AG04450 (cell line): ENCODE measurements at regions of chr12 and their contacts with region 1.

Region 1: DNA sequence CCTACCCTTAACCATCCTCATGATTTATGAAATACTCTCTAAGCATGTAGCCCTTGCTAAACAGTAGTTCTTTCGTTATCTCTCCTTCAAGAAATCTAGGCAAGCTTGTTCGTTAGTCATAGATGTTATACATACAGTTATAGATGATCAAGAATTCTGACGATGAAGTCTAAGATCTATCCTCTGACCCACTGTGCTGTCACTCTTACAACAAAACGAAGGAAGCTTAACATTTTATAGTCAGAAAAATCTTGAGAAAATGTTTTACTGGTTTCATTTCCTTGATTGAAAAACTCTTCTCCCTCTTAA is 68.9 kb downstream of the SPPL3 start:
- DNase-seq: no peak
- H3K4me3 ChIP-seq: no peak overlapping the region
- H3K27ac ChIP-seq: no peak overlapping the region
- H3K27me3 ChIP-seq: no peaks in the 10 kb centered on the region
- CTCF ChIP-seq: no peak

Region 2: GRCh38 chr12:120849765-120850164 is 14.5 kb after region 1 on chr12:
- CTCF ChIA-PET with region 1: no interaction called
- POLR2A ChIA-PET with region 1: no interaction called
- DNase-seq: peak; percentile 29
- H3K4me3 ChIP-seq: no peak overlapping the region
- H3K27ac ChIP-seq: no peak overlapping the region
- H3K27me3 ChIP-seq: no peaks in the 10 kb centered on the region
- CTCF ChIP-seq: no peak

Region 3: GRCh38 chr12:120920178-120920577 is 84.9 kb after region 1 on chr12:
- CTCF ChIA-PET with region 1: interaction called, 10 read pairs
- POLR2A ChIA-PET with region 1: no interaction called
- DNase-seq: no peak
- H3K4me3 ChIP-seq: no peak overlapping the region
- H3K27ac ChIP-seq: no peak overlapping the region
- H3K27me3 ChIP-seq: no peaks in the 10 kb centered on the region
- CTCF ChIP-seq: no peak

Region 4: DNA sequence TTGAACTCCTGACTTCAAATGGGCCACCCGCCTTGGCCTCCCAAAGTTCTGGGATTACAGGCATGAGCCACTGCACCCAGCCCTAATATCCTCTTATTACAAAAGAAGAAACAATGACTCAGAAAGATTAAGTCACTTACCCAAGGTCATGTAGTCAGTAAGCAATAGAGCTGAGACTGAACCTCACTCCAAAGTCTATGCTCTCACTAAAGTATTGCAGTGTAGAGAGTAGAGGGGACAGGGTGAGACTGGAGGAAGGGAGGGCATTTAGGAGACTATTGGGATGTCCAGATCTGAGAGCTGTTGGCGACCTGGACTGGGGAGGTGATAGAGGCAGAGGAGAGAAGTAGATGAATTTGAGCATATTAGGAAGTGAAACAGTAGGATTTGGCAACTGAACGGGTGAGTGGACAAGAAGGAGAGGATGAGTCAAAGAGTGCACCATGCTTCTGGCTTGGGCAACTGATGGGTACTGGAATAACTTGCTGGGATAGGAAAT is 309.2 kb after region 1 on chr12:
- CTCF ChIA-PET with region 1: no interaction called
- POLR2A ChIA-PET with region 1: no interaction called
- DNase-seq: no peak
- H3K4me3 ChIP-seq: no peak overlapping the region
- H3K27ac ChIP-seq: no peak overlapping the region
- H3K27me3 ChIP-seq: peaks cover 6% of the 10 kb centered on the region
- CTCF ChIP-seq: no peak